Naive thymus-derived CD4-positive, alpha-beta T cell (primary cell): ENCODE measurements at regions of chr7 and their contacts with region 1.

Region 1: DNA sequence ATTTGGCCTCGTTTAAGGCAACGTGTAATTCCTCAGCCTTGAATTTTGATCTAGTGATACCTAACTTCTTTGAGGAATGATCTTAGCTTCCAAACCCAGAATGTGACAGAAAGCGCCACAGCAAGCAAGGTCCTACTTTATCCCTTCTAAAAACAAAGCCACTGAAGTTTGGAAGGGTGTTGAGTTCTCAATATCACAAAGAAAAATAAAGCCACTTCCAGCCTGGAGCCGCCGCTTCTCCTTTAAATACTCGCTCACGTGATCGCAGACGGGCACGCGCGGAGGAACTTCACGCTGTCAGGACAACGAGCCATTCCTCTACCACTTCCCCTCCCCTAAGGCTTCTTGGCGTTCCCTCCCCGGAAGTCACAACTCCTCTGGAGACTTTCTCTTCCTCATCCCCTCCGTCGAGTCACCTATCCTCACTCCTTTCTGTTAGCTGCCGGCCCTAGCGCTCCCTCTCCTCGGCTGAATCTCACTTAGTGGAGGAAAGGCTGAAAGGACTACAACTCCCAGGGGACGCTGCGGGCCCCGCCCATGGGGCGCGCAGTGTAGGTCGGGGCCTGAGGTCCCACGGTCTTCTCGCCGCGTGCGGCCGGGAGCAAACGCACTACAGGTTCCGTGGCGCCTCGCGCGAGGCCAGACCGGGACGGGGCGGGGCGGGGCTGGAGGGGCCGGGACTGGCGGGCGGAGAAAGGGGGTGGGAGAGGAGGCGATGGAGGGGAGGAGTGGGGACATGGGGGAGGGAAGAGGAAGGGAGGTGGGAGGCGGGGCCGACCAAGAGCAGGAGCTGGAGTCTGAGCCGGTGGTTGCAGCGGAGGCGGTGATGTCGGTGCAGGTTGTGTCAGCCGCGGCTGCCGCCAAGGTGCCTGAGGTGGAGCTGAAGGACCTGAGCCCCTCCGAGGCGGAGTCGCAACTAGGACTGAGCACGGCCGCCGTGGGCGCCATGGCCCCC is at the start of gene AHCYL2:
- DNase-seq: peak; percentile 88 to 98 (median 95)
- ATAC-seq: peak; percentile 96
- H3K4me3 ChIP-seq: peak within 1 kb of the TSS; percentile 96
- H3K4me3 Mint-ChIP-seq: peak within 1 kb of the TSS; percentile 88 to 99 (median 96)
- H3K27ac ChIP-seq: peak within 1 kb of the TSS; percentile 85
- H3K27ac Mint-ChIP-seq: peak within 1 kb of the TSS; percentile 87 to 98 (median 95)
- H3K4me1 ChIP-seq: peaks cover 13 to 16% of the 10 kb centered on the region in 2 donors
- H3K4me1 Mint-ChIP-seq: peaks cover 27 to 63% (median 48%) of the 10 kb centered on the region in 7 donors
- H3K27me3 ChIP-seq: no peaks in the 10 kb centered on the region
- H3K27me3 Mint-ChIP-seq: no peaks in the 10 kb centered on the region
- total RNA-seq, gene AHCYL2: 14.4 to 22.2 (median 20.4) TPM

Region 2: DNA sequence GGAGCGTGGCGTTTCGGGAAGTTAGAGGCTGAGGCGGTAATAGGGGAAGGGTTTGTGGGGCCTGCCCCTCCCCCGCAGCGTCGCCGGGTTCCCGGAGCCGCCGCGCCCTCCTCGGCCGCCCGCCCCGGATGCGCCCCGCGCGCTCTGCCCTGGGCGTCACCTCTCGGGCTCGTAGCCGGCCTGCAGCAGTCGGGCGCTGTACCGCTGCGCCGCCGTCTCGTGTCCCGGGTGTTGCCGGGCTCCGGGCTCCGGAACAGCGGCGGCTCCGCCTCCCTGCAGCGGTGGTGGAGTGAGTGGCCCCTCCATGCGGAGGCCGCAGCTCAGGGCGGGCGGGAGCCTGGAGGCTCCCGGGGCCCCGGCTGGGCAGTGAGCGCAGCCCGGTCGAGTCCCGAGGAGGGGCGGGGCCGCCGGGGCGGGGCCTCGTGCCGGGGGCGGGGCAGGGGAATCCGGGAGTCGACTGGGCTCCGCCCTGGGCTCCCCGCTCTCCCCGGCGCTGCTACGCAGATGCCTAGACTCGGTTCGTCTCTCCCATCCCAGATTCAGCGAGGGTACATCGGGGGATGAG is 814.9 kb before region 1 on chr7 and contains the start of gene IMPDH1:
- CTCF ChIA-PET with region 1: no interaction called
- POLR2A ChIA-PET with region 1: no interaction called
- intact Hi-C with region 1: loop called in 1 of 2 experiments (anchors 2 kb)
- DNase-seq: peak; percentile 73 to 95 (median 83)
- ATAC-seq: peak; percentile 87
- H3K4me3 ChIP-seq: peak within 1 kb of the TSS; percentile 89
- H3K4me3 Mint-ChIP-seq: peak within 1 kb of the TSS; percentile 88 to 95 (median 92)
- H3K27ac ChIP-seq: peak within 1 kb of the TSS; percentile 81
- H3K27ac Mint-ChIP-seq: peak within 1 kb of the TSS; percentile 87 to 93 (median 90)
- H3K4me1 ChIP-seq: peaks cover 15 to 27% of the 10 kb centered on the region in 2 donors
- H3K4me1 Mint-ChIP-seq: peaks cover 12 to 41% (median 38%) of the 10 kb centered on the region in 7 donors
- H3K27me3 ChIP-seq: no peaks in the 10 kb centered on the region
- H3K27me3 Mint-ChIP-seq: peaks cover 0 to 26% (median 0%) of the 10 kb centered on the region in 5 donors
- total RNA-seq, gene IMPDH1: 36.5 to 92.0 (median 44.4) TPM

Region 3: GRCh38 chr7:129054438-129055293 is 169.9 kb before region 1 on chr7 and contains the start of gene TNPO3:
- CTCF ChIA-PET with region 1: no interaction called
- POLR2A ChIA-PET with region 1: no interaction called
- intact Hi-C with region 1: loop called (anchors 1 kb)
- DNase-seq: peak; percentile 76 to 90 (median 85)
- ATAC-seq: peak; percentile 92
- H3K4me3 ChIP-seq: peak within 1 kb of the TSS; percentile 96
- H3K4me3 Mint-ChIP-seq: peak within 1 kb of the TSS; percentile 91 to 99 (median 99)
- H3K27ac ChIP-seq: peak within 1 kb of the TSS; percentile 92
- H3K27ac Mint-ChIP-seq: peak within 1 kb of the TSS; percentile 96 to 100 (median 99)
- H3K4me1 ChIP-seq: peaks cover 15 to 18% of the 10 kb centered on the region in 2 donors
- H3K4me1 Mint-ChIP-seq: peaks cover 17 to 51% (median 39%) of the 10 kb centered on the region in 7 donors
- H3K27me3 ChIP-seq: peaks cover 0 to 3% of the 10 kb centered on the region in 2 donors
- H3K27me3 Mint-ChIP-seq: peaks cover 4 to 13% (median 4%) of the 10 kb centered on the region in 5 donors
- total RNA-seq, gene TNPO3: 28.6 to 40.6 (median 39.6) TPM

Region 4: GRCh38 chr7:129210256-129210988 is 14.1 kb before region 1 on chr7:
- CTCF ChIA-PET with region 1: no interaction called
- POLR2A ChIA-PET with region 1: no interaction called
- intact Hi-C with region 1: no loop called
- DNase-seq: peak; percentile 26 to 76 (median 51)
- ATAC-seq: peak; percentile 81
- H3K4me3 ChIP-seq: no peak overlapping the region
- H3K4me3 Mint-ChIP-seq: no peak overlapping the region
- H3K27ac ChIP-seq: no peak overlapping the region
- H3K27ac Mint-ChIP-seq: peak overlapping the region in 1 of 9 donors; percentile 51
- H3K4me1 ChIP-seq: no peaks in the 10 kb centered on the region
- H3K4me1 Mint-ChIP-seq: peaks cover 0 to 2% (median 0%) of the 10 kb centered on the region in 7 donors
- H3K27me3 ChIP-seq: no peaks in the 10 kb centered on the region
- H3K27me3 Mint-ChIP-seq: peaks cover 0 to 6% (median 3%) of the 10 kb centered on the region in 5 donors

Region 5: DNA sequence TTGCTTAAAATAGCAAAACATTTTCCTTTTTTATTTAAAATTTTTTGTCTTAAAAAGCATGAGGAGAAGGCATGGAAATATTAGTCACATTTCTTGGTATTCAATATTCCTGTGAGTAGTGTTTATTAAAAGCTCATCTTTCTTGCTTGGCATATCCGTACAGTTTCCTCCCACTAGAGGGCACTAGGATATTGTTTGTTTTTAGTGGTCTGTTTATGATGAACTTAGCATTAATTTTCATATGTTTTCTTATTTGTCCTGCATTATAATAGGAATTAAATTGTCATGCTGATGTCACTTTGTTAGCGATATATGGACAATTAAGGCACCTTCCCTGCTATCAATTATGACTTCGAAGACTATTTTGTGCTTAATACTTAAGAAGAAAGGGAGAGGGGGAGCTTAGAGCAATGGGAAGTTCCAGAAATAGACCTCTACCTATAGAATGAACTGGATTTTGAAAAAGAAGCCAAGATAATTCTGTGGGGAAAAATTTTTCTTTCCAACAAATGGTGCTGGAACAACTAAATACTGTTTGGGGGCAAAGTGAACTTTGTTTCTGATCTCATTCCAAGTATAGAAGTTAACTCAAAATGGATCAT is 118.7 kb after region 1 on chr7:
- CTCF ChIA-PET with region 1: interaction called, 5 read pairs
- POLR2A ChIA-PET with region 1: no interaction called
- intact Hi-C with region 1: loop called in 1 of 2 experiments (anchors 2 kb)
- DNase-seq: peak in 7 of 9 donors; percentile 7 to 37 (median 22)
- ATAC-seq: peak; percentile 61
- H3K4me3 ChIP-seq: no peak overlapping the region
- H3K4me3 Mint-ChIP-seq: no peak overlapping the region
- H3K27ac ChIP-seq: no peak overlapping the region
- H3K27ac Mint-ChIP-seq: no peak overlapping the region
- H3K4me1 ChIP-seq: no peaks in the 10 kb centered on the region
- H3K4me1 Mint-ChIP-seq: peaks cover 6 to 35% (median 19%) of the 10 kb centered on the region in 7 donors
- H3K27me3 ChIP-seq: no peaks in the 10 kb centered on the region
- H3K27me3 Mint-ChIP-seq: no peaks in the 10 kb centered on the region

Region 6: GRCh38 chr7:129611246-129612111 is 387.0 kb after region 1 on chr7 and contains the start of gene NRF1:
- CTCF ChIA-PET with region 1: no interaction called
- POLR2A ChIA-PET with region 1: no interaction called
- intact Hi-C with region 1: loop called (anchors 1 to 2 kb)
- DNase-seq: peak; percentile 89 to 97 (median 94)
- ATAC-seq: peak; percentile 92
- H3K4me3 ChIP-seq: peak within 1 kb of the TSS; percentile 87
- H3K4me3 Mint-ChIP-seq: peak within 1 kb of the TSS; percentile 88 to 99 (median 96)
- H3K27ac ChIP-seq: peak within 1 kb of the TSS; percentile 82
- H3K27ac Mint-ChIP-seq: peak within 1 kb of the TSS; percentile 92 to 99 (median 96)
- H3K4me1 ChIP-seq: peaks cover 24 to 38% of the 10 kb centered on the region in 2 donors
- H3K4me1 Mint-ChIP-seq: peaks cover 37 to 79% (median 67%) of the 10 kb centered on the region in 7 donors
- H3K27me3 ChIP-seq: no peaks in the 10 kb centered on the region
- H3K27me3 Mint-ChIP-seq: no peaks in the 10 kb centered on the region
- total RNA-seq, gene NRF1: 25.8 to 49.3 (median 35.3) TPM

Region 7: GRCh38 chr7:130069978-130070860 is 845.7 kb after region 1 on chr7 and contains the start of gene KLHDC10:
- CTCF ChIA-PET with region 1: no interaction called
- POLR2A ChIA-PET with region 1: no interaction called
- intact Hi-C with region 1: loop called (anchors 1 to 2 kb)
- DNase-seq: peak; percentile 84 to 98 (median 96)
- ATAC-seq: peak; percentile 99
- H3K4me3 ChIP-seq: peak within 1 kb of the TSS; percentile 54
- H3K4me3 Mint-ChIP-seq: peak within 1 kb of the TSS; percentile 80 to 95 (median 92)
- H3K27ac ChIP-seq: peak within 1 kb of the TSS; percentile 82
- H3K27ac Mint-ChIP-seq: peak within 1 kb of the TSS; percentile 81 to 97 (median 90)
- H3K4me1 ChIP-seq: peaks cover 12 to 18% of the 10 kb centered on the region in 2 donors
- H3K4me1 Mint-ChIP-seq: peaks cover 34 to 51% (median 42%) of the 10 kb centered on the region in 7 donors
- H3K27me3 ChIP-seq: no peaks in the 10 kb centered on the region
- H3K27me3 Mint-ChIP-seq: peaks cover 0 to 2% (median 0%) of the 10 kb centered on the region in 5 donors
- total RNA-seq, gene KLHDC10: 14.5 to 20.4 (median 17.3) TPM